ENCODE measurements at regions of chr1 and their contacts with region 1.

Region 1: GRCh38 chr1:37387859-37388258 is 86.5 kb upstream of the ZC3H12A start:
- DNase-seq: no peak
- ATAC-seq: no peak
- H3K4me3 ChIP-seq: no peak overlapping the region
- H3K27ac ChIP-seq: no peak overlapping the region
- H3K4me1 ChIP-seq: no peaks in the 10 kb centered on the region
- CTCF ChIP-seq: no peak
- EP300 ChIP-seq: no peak
- POLR2A ChIP-seq: no peak
- RAD21 ChIP-seq: no peak

Region 2: GRCh38 chr1:37372302-37372701 is 15.6 kb before region 1 on chr1:
- CTCF ChIA-PET with region 1: interaction called, 10 read pairs
- POLR2A ChIA-PET with region 1: no interaction called
- DNase-seq: no peak
- ATAC-seq: no peak
- H3K4me3 ChIP-seq: no peak overlapping the region
- H3K27ac ChIP-seq: no peak overlapping the region
- H3K4me1 ChIP-seq: no peaks in the 10 kb centered on the region
- CTCF ChIP-seq: no peak
- EP300 ChIP-seq: no peak
- POLR2A ChIP-seq: no peak
- RAD21 ChIP-seq: no peak